Activated B cell treated with CpG ODN at 0.5 μM for 24 hours (primary cell): ENCODE measurements at regions of chr15 and their contacts with region 1.

Region 1: DNA sequence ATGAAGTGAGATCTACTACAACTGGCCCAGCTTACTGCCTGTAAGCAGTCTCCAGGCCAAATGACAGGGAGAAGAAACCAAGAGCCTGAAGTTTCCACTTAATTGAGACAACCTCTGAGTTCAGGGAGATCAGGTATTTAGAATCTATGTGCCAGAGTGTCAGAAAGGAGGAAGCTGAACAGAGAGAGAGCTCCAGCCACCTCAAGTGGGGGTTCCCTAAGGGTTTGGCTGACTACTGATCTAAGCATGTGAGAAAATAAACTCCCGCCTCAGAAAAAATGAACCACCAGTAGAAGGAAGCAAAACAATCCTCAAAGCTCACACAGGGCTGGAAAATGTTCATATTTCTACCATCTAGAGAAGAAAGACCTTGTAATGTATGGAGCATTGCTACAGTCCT is 25.0 kb downstream of the ADAM10 start:
- DNase-seq: no peak
- ATAC-seq: peak; percentile 92
- H3K4me3 Mint-ChIP-seq: peak overlapping the region; percentile 19
- H3K27ac Mint-ChIP-seq: peak overlapping the region; percentile 74
- H3K4me1 Mint-ChIP-seq: peaks cover 64% of the 10 kb centered on the region
- H3K27me3 Mint-ChIP-seq: no peaks in the 10 kb centered on the region
- CTCF ChIP-seq: no peak

Region 2: DNA sequence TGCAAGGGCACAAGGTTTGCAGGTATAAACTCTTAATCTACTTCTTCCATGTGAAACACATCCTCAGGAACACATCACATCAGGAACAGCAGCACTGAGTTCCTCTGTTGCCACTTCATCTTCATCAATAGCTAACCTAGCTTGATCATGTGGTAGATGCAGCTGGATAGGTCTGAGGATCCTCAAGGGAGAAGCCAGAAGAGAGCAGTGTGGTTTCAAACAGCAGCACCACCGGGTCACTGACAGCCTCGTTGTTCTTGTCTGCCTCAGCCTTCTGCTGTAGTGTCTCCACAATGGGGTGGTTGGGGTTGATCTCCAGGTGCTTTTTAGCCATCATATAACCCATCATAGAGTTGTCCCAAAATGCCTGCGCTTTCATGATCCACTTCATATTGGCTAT is 33.8 kb before region 1 on chr15:
- CTCF ChIA-PET with region 1: no interaction called
- POLR2A ChIA-PET with region 1: no interaction called
- intact Hi-C with region 1: loop called (anchors 5 kb)
- DNase-seq: no peak
- ATAC-seq: peak; percentile 97
- H3K4me3 Mint-ChIP-seq: no peak overlapping the region
- H3K27ac Mint-ChIP-seq: no peak overlapping the region
- H3K4me1 Mint-ChIP-seq: peaks cover 33% of the 10 kb centered on the region
- H3K27me3 Mint-ChIP-seq: no peaks in the 10 kb centered on the region
- CTCF ChIP-seq: no peak

Region 3: DNA sequence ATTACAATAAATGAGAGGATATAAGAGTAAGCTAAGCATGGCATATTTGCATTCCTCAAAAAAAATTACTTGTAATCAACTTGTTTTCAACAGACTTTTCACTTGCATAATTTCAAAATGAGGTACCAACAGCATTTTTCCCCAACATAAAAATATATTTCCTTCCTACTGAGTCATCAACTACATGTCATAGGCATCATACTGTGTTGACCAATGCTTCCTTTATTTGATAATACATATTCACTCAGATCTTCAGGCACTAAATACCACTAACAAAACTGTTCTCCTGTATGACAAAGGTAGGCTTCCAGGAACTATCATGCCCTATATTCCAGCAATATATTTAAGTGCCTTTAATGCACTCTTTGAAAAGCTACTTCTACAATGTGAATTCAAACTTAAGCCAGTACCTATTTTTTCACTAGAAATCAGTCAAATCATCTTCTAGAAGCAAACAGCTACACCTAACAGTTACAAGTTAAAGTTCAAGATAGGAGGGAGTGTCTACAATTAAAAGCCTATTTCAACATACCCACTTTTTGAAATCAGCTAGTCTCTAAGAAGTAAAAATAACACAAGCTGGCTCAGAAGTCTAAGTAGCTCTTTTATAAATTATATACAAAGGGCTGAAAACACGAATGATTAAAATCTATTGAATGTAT is 13.7 kb after region 1 on chr15:
- CTCF ChIA-PET with region 1: no interaction called
- POLR2A ChIA-PET with region 1: interaction called, 18 read pairs
- intact Hi-C with region 1: no loop called
- DNase-seq: no peak
- ATAC-seq: peak; percentile 31
- H3K4me3 Mint-ChIP-seq: no peak overlapping the region
- H3K27ac Mint-ChIP-seq: no peak overlapping the region
- H3K4me1 Mint-ChIP-seq: peaks cover 78% of the 10 kb centered on the region
- H3K27me3 Mint-ChIP-seq: no peaks in the 10 kb centered on the region
- CTCF ChIP-seq: no peak